Cardiac septum (tissue), 1 donor: ENCODE measurements at regions of chr1 and their contacts with region 1.

Region 1: DNA sequence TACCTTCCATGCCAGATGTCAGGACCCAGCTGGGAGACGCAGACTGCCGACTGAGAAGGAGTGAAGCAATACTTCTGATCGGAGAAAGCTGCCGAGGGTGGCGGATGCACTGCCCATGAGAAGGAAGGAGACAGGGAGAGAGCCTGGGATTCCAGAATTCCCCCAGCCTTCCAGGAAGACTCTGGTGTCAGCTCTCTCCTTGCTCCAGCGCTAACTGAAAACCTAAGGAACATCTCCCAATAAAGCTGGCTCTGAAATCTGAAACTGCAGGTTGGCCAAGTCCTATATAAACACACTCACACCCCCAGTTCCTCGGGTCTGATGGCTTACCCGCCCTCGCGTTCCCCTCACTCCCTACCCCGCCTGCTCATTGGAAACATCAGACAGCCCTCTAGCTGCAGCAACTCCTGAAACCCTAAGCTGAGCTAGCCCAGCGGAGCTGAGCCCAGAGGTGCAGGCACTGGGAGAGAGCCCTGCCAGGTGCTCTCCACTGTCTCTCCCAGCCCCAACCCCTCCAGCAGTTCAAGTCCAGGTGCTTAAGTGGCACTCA is 52.3 kb downstream of the PLEKHA6 start:
- DNase-seq: no peak

Region 2: DNA sequence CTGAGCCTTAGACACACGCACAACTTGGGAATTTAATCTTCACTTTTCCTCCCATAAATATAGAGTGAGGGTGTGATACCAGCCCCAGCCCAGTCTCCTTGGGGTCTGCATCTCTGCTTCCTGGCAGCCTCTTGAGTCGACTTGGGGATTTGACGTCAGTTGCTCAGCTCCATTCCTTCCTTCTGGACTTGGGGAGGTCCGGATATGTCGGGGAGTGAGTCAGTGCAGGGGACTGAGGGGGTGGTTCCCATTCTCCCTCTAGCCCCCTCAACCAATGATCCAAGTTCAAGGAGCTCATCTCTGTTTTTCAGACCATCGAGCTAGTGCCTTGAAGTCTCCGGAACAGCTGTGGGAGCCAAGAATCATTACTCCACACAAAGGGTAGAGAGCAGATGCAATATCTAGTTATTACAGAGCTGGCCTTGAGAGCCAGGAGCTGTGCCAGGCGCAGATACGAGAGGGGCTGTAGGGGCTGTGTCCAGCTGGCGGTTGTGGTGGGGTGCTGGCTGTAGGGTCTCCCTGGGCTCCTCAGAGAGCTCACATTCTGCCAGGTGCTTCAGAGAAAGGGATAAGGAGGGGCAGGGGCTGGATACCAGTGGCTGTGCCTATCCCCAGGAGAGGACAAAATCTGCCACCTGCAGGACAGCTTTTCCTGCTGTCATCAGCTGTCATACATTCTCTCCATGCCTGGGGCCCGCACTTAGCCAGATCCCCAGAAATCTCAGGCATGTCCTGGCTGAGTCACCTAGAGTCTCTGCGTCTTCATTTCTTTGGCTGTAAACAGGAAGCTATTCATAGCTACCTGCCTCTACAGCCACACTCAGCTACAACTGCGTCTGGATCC is 109.0 kb before region 1 on chr1:
- intact Hi-C with region 1: no loop called
- DNase-seq: peak; percentile 57

Region 3: DNA sequence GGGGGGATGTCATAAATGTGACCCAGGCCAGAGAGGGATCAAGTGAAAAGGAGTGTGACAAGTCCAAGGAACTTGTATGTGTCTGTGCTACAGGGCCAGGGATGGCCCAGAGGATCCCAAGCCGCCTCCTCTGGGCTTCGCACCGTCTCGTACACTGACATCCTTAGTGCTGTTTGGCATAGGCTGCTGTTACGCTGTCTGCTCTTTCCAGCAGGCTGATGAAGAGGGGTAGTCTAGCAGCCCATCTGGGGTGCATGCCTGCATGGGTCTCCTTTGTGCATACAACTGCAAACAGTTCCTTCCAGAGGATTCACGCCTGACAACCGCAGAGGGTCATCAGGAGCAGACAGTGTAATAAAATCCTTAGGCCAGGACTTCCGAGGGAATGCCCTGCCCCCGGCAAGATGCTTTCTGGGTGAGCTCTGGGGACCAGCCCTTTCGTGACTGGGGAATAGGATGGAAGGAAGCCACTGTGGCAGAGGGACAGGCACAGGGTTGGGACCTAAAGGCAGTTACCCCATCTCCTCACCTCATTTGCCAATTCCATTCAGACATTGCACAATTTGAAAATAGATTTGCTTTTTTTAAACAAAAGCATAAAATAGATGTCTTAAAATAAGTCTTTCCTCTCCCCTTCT is 87.3 kb before region 1 on chr1:
- intact Hi-C with region 1: loop called (anchors 5 kb)
- DNase-seq: no peak

Region 4: GRCh38 chr1:204257954-204258752 is 49.3 kb before region 1 on chr1:
- intact Hi-C with region 1: loop called (anchors 5 kb)
- DNase-seq: no peak

Region 5: GRCh38 chr1:204417231-204417997 is 110.0 kb after region 1 on chr1:
- intact Hi-C with region 1: no loop called
- DNase-seq: no peak

Region 6: DNA sequence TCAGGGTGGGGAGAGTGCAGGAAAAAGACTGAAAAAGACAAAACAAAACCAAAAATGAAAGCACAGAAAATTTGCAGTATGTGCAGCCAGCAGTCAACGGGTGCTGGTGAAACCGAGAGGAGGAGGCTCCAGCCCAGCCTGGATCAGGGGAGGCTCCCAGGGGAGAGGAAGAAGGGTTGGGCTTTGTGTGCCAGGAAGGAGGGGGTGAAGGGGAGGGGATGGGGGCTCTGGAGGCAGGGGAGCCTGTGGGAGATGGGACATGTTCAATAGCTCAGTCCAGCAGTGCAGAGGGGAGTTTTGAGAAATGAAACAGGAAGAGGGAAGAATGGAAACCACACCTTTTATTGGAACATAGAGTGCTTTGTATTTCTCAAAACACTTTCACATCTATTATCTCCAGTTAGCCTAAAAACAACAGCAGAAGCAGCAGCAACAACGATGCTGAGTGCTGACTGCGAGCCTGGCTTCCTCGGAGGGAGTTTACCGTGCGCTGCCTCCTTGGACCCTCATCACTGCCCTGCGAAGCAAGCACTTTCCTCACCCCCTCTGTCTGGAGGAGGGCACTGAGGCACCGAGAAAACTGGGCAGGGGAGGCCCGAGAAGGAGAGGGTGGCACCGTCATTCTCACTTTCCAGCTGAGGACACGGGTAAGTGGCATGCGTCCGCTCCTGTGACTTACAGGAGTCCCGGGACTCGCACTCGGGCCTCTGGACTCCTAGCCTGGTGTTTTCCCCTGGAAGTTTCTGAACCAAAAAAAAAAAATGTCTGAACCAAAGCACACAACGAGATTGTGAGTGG is 271.7 kb after region 1 on chr1:
- intact Hi-C with region 1: no loop called
- DNase-seq: no peak